PC-9 (cell line): ENCODE measurements at regions of chr2 and their contacts with region 1.

Region 1: GRCh38 chr2:28300485-28301341 is 91.9 kb upstream of the FOSL2 start:
- DNase-seq: no peak
- H3K4me3 ChIP-seq: no peak overlapping the region
- H3K27ac ChIP-seq: no peak overlapping the region
- H3K4me1 ChIP-seq: peaks cover 19% of the 10 kb centered on the region
- H3K27me3 ChIP-seq: no peaks in the 10 kb centered on the region
- CTCF ChIP-seq: no peak

Region 2: DNA sequence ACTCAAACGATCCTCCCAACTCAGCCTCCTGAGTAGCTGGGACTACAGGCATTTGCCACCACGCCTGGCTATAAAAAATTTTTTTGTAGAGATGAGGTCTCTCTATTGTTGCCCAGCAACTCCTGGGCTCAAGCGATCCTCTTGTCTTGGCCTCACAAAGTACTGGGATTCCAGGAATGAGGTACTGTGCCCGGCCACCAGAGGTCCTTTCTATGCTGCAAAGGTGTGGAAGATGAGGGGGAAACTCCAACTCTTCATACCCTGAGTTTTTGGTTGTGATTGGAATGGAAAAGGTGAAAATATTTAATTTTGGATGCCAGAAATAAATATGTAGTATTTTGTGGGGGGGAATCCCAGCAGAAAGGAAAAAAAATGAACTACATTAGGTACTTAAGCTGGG is 493.2 kb before region 1 on chr2:
- CTCF ChIA-PET with region 1: interaction called, 10 read pairs
- POLR2A ChIA-PET with region 1: no interaction called
- intact Hi-C with region 1: no loop called
- DNase-seq: peak in 1 of 2 experiments; percentile 17
- H3K4me3 ChIP-seq: no peak overlapping the region
- H3K27ac ChIP-seq: no peak overlapping the region
- H3K4me1 ChIP-seq: peaks cover 30% of the 10 kb centered on the region
- H3K27me3 ChIP-seq: no peaks in the 10 kb centered on the region
- CTCF ChIP-seq: peak; percentile 66

Region 3: GRCh38 chr2:28252311-28252710 is 48.4 kb before region 1 on chr2:
- CTCF ChIA-PET with region 1: interaction called, 8 read pairs
- POLR2A ChIA-PET with region 1: interaction called, 14 read pairs
- intact Hi-C with region 1: no loop called
- DNase-seq: no peak
- H3K4me3 ChIP-seq: no peak overlapping the region
- H3K27ac ChIP-seq: no peak overlapping the region
- H3K4me1 ChIP-seq: peaks cover 20% of the 10 kb centered on the region
- H3K27me3 ChIP-seq: no peaks in the 10 kb centered on the region
- CTCF ChIP-seq: no peak